ENCODE measurements at regions of chr6 and their contacts with region 1.

Region 1: DNA sequence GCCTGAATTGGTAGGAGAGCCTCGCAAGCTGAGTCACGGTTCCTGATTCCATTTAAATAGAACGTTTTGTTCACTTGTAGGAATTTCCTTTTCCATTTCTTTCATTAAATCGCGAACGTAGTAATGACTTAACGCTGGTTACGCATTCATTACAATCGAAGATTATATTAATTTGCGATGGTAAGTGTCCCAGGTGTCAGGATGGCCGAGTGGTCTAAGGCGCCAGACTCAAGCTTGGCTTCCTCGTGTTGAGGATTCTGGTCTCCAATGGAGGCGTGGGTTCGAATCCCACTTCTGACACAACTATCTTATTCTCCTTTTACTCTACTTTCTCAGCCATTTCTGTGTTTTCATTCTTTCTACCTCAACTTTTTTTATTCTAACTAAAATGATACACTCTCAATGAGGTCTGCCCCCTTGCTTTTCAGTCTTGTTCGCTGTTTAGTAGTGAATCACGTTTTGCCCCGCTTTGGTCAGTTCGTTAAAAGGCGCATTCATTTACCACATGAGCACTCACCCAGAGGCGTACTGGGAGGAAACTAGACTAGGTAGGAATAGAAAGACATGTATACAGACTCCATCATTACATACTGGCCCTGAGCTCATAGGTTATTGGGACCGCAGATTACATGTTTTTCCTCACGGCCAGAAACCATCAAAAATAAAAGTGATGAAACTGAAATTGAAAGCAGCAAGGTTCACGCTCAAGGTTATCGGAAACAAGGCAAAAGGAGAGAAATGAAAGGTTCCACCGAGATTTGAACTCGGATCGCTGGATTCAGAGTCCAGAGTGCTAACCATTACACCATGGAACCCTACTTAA is 17.3 kb upstream of the TRIM27 start:
- DNase-seq: peak; percentile 90
- H3K4me3 Mint-ChIP-seq: peak overlapping the region; percentile 83
- H3K27ac Mint-ChIP-seq: peak overlapping the region; percentile 57
- H3K4me1 Mint-ChIP-seq: peaks cover 7% of the 10 kb centered on the region
- H3K27me3 Mint-ChIP-seq: no peaks in the 10 kb centered on the region
- CTCF ChIP-seq: no peak

Region 2: DNA sequence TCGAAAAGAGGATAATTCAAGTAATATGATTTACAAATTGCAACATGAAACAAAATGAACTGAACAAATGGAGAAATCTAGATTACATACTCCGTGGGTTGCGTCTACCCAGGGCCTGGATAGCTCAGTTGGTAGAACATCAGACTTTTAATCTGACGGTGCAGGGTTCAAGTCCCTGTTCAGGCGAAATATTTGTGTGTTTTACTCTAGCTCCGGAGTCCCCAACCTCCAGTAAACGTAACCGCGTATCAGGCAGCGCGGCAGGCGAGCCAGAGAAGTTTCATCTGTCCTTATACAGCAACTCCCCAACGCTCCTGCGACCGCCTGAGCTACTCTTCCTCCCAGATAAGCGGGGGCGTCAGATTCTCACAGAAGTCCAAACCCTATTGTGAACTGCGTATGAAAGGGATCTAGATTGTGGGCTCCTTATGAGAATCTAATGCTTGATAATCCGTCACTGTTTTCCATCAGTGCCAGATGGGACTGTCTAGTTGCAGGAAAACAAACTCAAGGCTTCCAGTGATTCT is 193.4 kb before region 1 on chr6:
- CTCF ChIA-PET with region 1: no interaction called
- POLR2A ChIA-PET with region 1: no interaction called
- intact Hi-C with region 1: loop called (anchors 5 kb)
- DNase-seq: peak; percentile 86
- H3K4me3 Mint-ChIP-seq: peak overlapping the region; percentile 76
- H3K27ac Mint-ChIP-seq: peak overlapping the region; percentile 81
- H3K4me1 Mint-ChIP-seq: no peaks in the 10 kb centered on the region
- H3K27me3 Mint-ChIP-seq: no peaks in the 10 kb centered on the region
- CTCF ChIP-seq: no peak

Region 3: DNA sequence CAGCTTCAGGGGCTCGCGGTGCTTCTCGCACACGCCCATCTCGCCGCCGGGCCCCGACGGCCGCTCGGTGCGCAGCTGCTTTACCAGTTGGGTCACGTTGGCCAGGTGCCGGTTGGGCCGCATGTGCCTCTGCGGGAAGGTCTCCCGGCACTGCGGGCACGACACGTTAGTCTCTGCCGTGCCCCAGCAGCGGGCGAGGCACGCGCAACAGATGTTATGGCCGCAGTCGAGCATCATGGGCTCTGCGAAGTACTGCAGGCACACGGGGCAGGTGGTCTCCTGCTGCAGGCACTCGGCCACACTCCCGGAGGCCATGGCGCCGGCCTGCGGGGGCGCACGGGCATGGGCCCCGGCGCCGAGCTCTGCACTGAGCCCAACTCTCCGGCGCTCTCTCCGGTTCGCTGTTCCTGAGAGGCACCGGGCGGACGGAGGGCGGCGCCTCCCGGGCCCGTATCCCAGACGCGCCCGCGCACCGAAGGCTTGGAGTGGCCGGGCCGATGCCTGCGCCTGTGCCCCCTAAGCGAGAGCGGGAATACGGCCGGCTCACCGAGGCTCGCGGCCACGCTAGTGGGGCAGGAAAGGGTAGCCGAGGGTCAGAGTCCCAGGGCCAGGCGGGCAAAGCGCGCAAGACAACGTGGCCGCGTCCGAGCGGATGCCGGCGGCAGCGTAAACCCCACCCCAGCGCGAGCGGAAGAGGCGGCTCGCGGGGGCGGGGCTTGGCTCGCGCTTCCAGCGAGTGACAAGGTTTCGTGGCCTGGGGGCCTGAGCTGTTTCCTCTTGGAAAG is 17.6 kb before region 1 on chr6 and contains the start of gene TRIM27:
- CTCF ChIA-PET with region 1: interaction called, 8 read pairs
- POLR2A ChIA-PET with region 1: interaction called, 166 read pairs
- intact Hi-C with region 1: loop called (anchors 1 kb)
- DNase-seq: peak; percentile 92
- H3K4me3 Mint-ChIP-seq: peak within 1 kb of the TSS; percentile 93
- H3K27ac Mint-ChIP-seq: peak within 1 kb of the TSS; percentile 88
- H3K4me1 Mint-ChIP-seq: peaks cover 19% of the 10 kb centered on the region
- H3K27me3 Mint-ChIP-seq: no peaks in the 10 kb centered on the region
- CTCF ChIP-seq: no peak
- total RNA-seq, gene TRIM27: 68.8 and 68.9 TPM in 2 replicates

Region 4: DNA sequence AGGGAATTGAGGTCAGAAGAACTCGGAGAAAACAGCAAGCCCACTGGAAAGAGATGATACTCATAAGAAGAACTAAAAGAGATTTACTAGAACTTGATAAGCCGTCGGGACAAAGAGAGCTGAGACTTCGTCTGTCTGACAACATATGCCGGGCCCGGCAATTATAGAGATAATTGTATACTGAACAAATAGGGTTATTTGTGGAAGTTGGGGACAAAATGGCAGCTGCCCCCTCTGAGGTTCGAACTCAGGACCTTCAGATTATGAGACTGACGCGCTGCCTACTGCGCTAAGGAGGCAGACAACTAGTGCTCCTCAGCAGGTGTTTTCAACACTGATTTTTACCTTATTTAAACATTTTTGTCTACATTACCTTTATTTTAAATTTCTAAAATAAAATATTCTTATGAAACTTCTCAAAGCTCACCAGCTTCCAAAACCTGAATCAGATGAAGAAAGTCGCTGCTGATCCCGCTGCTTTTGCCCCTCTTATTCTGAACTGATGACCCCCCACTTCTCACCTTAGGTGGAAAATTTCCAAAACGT is 12.0 kb after region 1 on chr6:
- CTCF ChIA-PET with region 1: no interaction called
- POLR2A ChIA-PET with region 1: interaction called, 8 read pairs
- intact Hi-C with region 1: loop called (anchors 1 kb)
- DNase-seq: peak; percentile 63
- H3K4me3 Mint-ChIP-seq: peak overlapping the region; percentile 77
- H3K27ac Mint-ChIP-seq: peak overlapping the region; percentile 51
- H3K4me1 Mint-ChIP-seq: peaks cover 8% of the 10 kb centered on the region
- H3K27me3 Mint-ChIP-seq: no peaks in the 10 kb centered on the region
- CTCF ChIP-seq: no peak

Region 5: DNA sequence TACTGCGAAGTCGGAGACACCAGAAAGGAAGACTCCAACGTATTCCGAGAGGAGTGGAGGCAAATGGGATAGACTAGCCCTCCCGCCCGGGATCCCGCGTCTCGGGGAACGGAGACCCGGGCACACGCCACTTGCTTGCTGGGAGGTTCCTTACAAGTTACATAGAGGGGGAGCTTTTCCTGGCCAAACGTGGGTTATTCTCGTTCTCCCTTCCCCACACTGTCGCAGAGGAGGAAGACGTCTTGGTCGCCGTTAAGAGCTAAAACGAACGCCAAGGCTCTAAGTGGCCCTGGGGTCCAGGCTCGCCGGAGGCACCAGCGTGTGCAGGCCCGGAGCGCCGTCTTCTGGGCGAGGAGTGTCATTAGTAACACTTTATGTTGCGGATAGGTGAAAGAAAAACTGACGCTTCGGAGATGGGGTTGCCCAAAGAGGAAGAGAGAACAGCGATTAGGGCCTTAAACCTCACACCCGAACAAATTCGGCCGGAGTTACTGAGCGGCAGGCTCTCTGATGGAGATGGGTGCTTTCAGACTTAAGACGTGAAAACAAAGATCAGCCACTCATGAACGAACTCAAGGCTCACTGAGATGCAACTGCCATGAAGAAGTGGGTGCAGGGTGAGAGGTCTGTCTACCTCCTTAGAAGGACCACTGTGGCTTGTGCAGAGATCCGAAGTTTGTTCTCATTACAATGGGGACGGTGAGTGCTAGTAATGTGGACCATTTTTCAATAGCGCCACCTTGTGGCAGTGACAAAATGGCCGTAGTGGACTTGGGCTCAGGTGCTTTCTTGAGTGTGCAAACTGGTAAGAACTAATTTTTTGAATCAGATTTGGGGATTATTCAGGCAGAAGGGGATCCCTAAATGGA is 75.7 kb after region 1 on chr6:
- CTCF ChIA-PET with region 1: interaction called, 5 read pairs
- POLR2A ChIA-PET with region 1: interaction called, 4 read pairs
- intact Hi-C with region 1: loop called (anchors 1 kb)
- DNase-seq: peak; percentile 89
- H3K4me3 Mint-ChIP-seq: peak overlapping the region; percentile 69
- H3K27ac Mint-ChIP-seq: no peak overlapping the region
- H3K4me1 Mint-ChIP-seq: peaks cover 12% of the 10 kb centered on the region
- H3K27me3 Mint-ChIP-seq: peaks cover 4% of the 10 kb centered on the region
- CTCF ChIP-seq: peak; percentile 79

Measured in MCF 10A (cell line).